GM10248 (cell line): ENCODE measurements at regions of chr10 and their contacts with region 1.

Region 1: GRCh38 chr10:72426986-72427385 is 72.3 kb upstream of the DNAJB12 start:
- DNase-seq: no peak
- CTCF ChIP-seq: no peak

Region 2: DNA sequence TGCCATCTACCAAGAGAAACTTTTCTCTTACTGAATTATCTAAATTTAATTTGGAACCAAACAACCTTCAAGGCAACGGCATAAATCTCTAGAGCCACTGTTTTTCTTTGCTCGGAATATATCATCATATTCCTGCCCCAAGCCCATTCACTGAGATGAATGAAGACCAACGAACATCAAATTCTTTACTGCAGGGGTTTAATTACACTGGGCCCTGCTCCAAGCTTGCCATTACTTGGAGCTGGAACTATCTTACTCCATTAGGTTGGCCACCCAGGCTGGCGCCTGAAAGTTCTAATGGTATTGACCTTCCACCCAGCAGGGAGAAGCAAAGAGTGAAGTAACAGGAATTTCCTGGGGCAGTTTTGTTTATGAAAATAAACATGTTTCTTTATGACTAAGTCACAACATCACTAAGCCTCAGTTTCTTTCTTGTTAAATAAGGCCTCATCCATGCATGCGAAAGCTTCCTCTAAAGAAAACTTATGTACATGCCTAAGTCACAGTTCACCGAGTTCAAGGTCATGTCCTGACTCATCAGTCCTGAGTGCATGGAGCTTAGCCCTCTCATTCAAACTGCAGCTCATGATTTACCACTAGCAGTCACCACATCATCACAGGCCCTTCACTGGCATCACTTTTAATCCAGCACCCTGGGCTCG is 253.2 kb before region 1 on chr10:
- CTCF ChIA-PET with region 1: no interaction called
- POLR2A ChIA-PET with region 1: no interaction called
- DNase-seq: no peak
- CTCF ChIP-seq: no peak

Region 3: GRCh38 chr10:72414642-72415041 is 12.3 kb before region 1 on chr10:
- CTCF ChIA-PET with region 1: interaction called, 12 read pairs
- POLR2A ChIA-PET with region 1: no interaction called
- DNase-seq: no peak
- CTCF ChIP-seq: no peak